ENCODE measurements at regions of chr6 and their contacts with region 1.

Region 1: GRCh38 chr6:113433335-113433991 is 423.7 kb upstream of the MARCKS start:
- DNase-seq: peak; percentile 66
- ATAC-seq: no peak
- H3K4me3 ChIP-seq: no peak overlapping the region
- H3K27ac ChIP-seq: no peak overlapping the region
- H3K4me1 ChIP-seq: peaks cover 12% of the 10 kb centered on the region; the same call in 1 of the 2 replicates
- H3K27me3 ChIP-seq: no peaks in the 10 kb centered on the region
- CTCF ChIP-seq: no peak

Region 2: DNA sequence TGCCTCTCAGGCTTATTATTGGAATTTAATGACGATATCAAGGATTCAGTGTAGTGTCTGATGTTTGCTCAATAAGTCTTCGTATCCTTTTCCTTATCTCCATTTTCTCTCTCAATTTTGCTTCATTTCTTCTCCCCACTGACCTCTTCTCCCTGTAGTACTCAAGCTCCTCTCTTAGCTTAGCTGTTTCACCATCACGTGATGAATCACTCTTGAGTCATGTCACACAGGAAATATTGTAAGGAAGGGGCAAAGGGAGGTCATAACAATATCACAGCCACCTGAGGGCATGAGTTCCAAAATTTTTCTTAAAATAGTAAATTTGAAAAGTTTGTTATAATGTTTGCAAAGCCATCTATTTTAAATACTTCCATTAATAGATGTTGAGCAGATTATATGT is 31.5 kb after region 1 on chr6:
- CTCF ChIA-PET with region 1: no interaction called
- POLR2A ChIA-PET with region 1: no interaction called
- intact Hi-C with region 1: no loop called
- DNase-seq: peak; percentile 77
- ATAC-seq: peak; percentile 89
- H3K4me3 ChIP-seq: no peak overlapping the region
- H3K27ac ChIP-seq: 0 out of 2 replicates have a peak overlapping the region, but pooled peaks have one; percentile 4
- H3K4me1 ChIP-seq: peaks cover 16% of the 10 kb centered on the region
- H3K27me3 ChIP-seq: no peaks in the 10 kb centered on the region
- CTCF ChIP-seq: no peak

Region 3: GRCh38 chr6:113495506-113495905 is 62.0 kb after region 1 on chr6:
- CTCF ChIA-PET with region 1: no interaction called
- POLR2A ChIA-PET with region 1: interaction called, 10 read pairs
- intact Hi-C with region 1: no loop called
- DNase-seq: peak; percentile 48
- ATAC-seq: peak; percentile 45
- H3K4me3 ChIP-seq: no peak overlapping the region
- H3K27ac ChIP-seq: no peak overlapping the region
- H3K4me1 ChIP-seq: 0 out of 2 replicates have a peak, but pooled peaks cover under 1% of the 10 kb centered on the region
- H3K27me3 ChIP-seq: no peaks in the 10 kb centered on the region
- CTCF ChIP-seq: no peak

Measured in PC-3 (cell line).